Keratinocyte (primary cell): ENCODE measurements at regions of chr21 and their contacts with region 1.

Region 1: GRCh38 chr21:31460980-31461379 is 116.9 kb upstream of the TIAM1 start:
- DNase-seq: no peak
- H3K4me3 ChIP-seq: no peak overlapping the region
- H3K27ac ChIP-seq: no peak overlapping the region
- H3K4me1 ChIP-seq: no peaks in the 10 kb centered on the region
- H3K27me3 ChIP-seq: no peaks in the 10 kb centered on the region
- CTCF ChIP-seq: no peak

Region 2: GRCh38 chr21:31397515-31397926 is 63.5 kb before region 1 on chr21:
- dilution Hi-C with region 1: loop called (anchors 5 kb)
- DNase-seq: no peak
- H3K4me3 ChIP-seq: no peak overlapping the region
- H3K27ac ChIP-seq: no peak overlapping the region
- H3K4me1 ChIP-seq: no peaks in the 10 kb centered on the region
- H3K27me3 ChIP-seq: no peaks in the 10 kb centered on the region
- CTCF ChIP-seq: no peak

Region 3: DNA sequence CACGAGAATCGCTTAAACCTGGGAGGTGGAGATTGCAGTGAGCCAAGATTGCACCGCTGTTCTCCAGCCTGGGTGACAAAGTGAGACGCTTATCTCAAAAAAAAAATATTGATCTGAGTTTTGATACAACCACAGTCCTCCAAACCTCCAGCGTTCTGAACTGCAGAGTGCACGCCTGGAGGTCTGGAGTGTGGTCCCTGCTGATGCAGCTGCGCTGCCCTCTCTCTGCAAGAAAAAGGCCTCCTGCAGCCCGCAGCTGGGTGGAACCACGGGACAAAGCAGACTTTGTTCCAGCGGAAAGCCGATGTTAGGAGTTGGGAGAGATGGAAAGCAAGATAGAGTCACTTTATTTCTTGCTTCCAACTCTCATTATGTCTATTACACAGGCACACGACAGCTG is 53.6 kb after region 1 on chr21:
- dilution Hi-C with region 1: no loop called
- DNase-seq: no peak
- H3K4me3 ChIP-seq: no peak overlapping the region
- H3K27ac ChIP-seq: no peak overlapping the region
- H3K4me1 ChIP-seq: peaks cover 7% of the 10 kb centered on the region
- H3K27me3 ChIP-seq: no peaks in the 10 kb centered on the region
- CTCF ChIP-seq: peak; percentile 8 to 36 (median 35)